HCT116 (cell line): ENCODE measurements at regions of chr11 and their contacts with region 1.

Region 1: GRCh38 chr11:126355324-126355925 is at the start of gene ST3GAL4:
- DNase-seq: no peak
- ATAC-seq: peak; percentile 79
- H3K4me3 ChIP-seq: peak within 1 kb of the TSS; percentile 73 to 95
- H3K27ac ChIP-seq: peak within 1 kb of the TSS; percentile 75
- H3K4me1 ChIP-seq: peaks cover 22 to 46% of the 10 kb centered on the region in 2 experiments
- H3K27me3 ChIP-seq: no peaks in the 10 kb centered on the region
- CTCF ChIP-seq: no peak
- POLR2A ChIP-seq: peak; percentile 23
- RAD21 ChIP-seq: no peak
- total RNA-seq, gene ST3GAL4: 13.1 TPM

Region 2: GRCh38 chr11:126403658-126404057 is 48.2 kb after region 1 on chr11:
- CTCF ChIA-PET with region 1: interaction called, 3 read pairs
- POLR2A ChIA-PET with region 1: no interaction called
- RAD21 ChIA-PET with region 1: no interaction called
- intact Hi-C with region 1: loop called (anchors 2 kb)
- DNase-seq: no peak
- ATAC-seq: no peak
- H3K4me3 ChIP-seq: no peak overlapping the region
- H3K27ac ChIP-seq: no peak overlapping the region
- H3K4me1 ChIP-seq: peaks cover 34 to 42% of the 10 kb centered on the region in 2 experiments
- H3K27me3 ChIP-seq: no peaks in the 10 kb centered on the region
- CTCF ChIP-seq: no peak
- POLR2A ChIP-seq: no peak
- RAD21 ChIP-seq: no peak